Breast epithelium (tissue), 4 donors: ENCODE measurements at regions of chr19 and their contacts with region 1.

Region 1: GRCh38 chr19:54159352-54160181 is at the start of gene LENG1:
- DNase-seq: peak; percentile 100
- H3K4me3 ChIP-seq: peak within 1 kb of the TSS; percentile 65 to 88 (median 78)
- H3K27ac ChIP-seq: peak within 1 kb of the TSS; percentile 92 to 97
- H3K4me1 ChIP-seq: peaks cover 0 to 7% of the 10 kb centered on the region in 2 donors
- H3K27me3 ChIP-seq: no peaks in the 10 kb centered on the region
- CTCF ChIP-seq: peak in 2 of 3 donors; percentile 23 to 43
- POLR2A ChIP-seq: peak; percentile 45
- total RNA-seq, gene LENG1: 6.4 to 8.5 (median 8.0) TPM

Region 2: DNA sequence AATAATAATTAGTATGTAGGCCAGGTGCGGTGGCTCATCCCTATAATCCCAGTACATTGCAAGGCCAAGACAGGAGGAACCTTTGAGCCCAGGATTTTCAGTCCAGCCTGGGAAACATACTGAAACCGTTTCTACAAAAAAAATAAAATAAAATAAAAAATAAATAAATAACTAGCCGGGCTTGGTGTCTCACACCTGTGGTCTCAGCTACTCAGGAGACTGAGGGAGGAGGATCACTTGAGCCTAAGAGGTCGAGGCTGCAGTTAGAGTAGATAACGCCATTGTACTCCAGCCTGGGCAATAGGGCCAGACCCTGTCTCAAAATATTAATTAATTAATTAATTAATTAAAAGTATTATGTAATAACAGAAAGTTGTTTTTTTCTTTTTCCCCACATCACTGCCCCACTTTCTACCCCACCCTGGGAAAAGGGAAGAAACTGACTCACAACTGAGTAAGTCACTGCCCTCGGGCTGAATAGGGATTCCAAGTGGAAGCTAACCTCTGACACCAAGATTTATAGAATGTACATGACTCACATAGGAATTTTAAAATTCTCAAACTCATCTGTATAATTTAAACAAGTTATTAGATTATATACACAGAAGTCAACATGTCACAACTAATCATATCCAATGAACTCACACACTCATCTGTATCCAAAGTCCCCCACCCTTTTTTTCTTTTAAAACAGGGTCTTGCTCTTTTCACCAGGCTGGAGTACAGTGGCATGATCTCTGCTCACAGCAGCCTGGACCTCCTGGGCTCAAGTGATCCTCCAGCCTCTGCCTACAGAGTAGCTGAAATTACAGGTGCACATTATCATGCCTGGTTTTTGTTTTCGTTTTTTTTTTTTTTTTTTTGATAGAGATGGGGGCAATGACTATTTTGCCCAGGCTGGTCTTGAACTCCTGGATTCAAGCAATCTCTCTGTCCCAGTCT is 1437.2 kb before region 1 on chr19:
- intact Hi-C with region 1: loop called (anchors 5 kb)
- DNase-seq: no peak
- H3K4me3 ChIP-seq: no peak overlapping the region
- H3K27ac ChIP-seq: no peak overlapping the region
- H3K4me1 ChIP-seq: no peaks in the 10 kb centered on the region
- H3K27me3 ChIP-seq: no peaks in the 10 kb centered on the region
- CTCF ChIP-seq: no peak
- POLR2A ChIP-seq: no peak

Region 3: DNA sequence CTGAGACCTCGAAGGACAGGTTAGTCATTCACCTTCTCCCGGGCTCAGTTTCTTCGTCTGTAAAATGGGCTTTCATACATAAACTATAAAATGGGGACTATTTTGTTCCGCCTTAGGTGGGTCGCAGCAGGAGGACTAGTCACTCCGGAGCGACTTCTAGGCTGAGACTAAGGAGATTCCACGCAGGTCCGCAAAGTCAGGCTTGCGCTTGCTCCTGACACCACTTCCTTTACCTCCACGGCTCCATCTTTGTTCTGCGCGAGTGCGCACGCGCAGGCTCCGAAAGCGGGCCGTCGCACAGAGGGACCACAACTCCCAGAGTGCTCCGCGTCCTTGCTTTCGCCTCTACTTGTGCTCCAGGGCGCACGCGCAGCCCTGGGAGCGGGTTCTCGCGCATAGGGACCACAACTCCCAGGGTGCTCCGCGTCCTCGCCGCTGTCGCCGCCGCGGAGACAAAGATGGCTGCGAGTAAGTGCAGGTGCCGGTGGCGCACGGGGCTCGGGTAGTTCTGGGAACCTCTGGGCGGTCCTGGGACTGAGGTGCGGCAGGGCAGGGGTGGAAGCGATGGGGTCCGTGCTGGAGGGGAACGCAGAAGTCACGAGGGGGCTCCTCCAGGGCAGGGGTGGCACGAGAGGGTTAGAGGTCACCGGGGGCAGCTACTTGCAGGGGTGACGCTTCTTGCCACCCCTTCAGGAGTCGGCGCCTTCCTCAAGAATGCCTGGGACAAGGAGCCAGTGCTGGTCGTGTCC is 57.0 kb before region 1 on chr19 and contains the start of gene NDUFA3:
- intact Hi-C with region 1: no loop called
- DNase-seq: peak; percentile 96 to 99
- H3K4me3 ChIP-seq: peak within 1 kb of the TSS; percentile 82 to 96 (median 96)
- H3K27ac ChIP-seq: peak within 1 kb of the TSS; percentile 59 to 76
- H3K4me1 ChIP-seq: no peaks in the 10 kb centered on the region
- H3K27me3 ChIP-seq: no peaks in the 10 kb centered on the region
- CTCF ChIP-seq: no peak
- POLR2A ChIP-seq: peak; percentile 62
- total RNA-seq, gene NDUFA3: 17.3 to 20.6 (median 20.5) TPM

Region 4: GRCh38 chr19:55305483-55305882 is 1145.9 kb after region 1 on chr19:
- intact Hi-C with region 1: no loop called
- DNase-seq: no peak
- H3K4me3 ChIP-seq: no peak overlapping the region
- H3K27ac ChIP-seq: no peak overlapping the region
- H3K4me1 ChIP-seq: no peaks in the 10 kb centered on the region
- H3K27me3 ChIP-seq: no peaks in the 10 kb centered on the region
- CTCF ChIP-seq: no peak
- POLR2A ChIP-seq: no peak